Activated T-helper 2 cell treated with anti-CD3 and anti-CD28 coated beads, Interferon-gamma antibody, Interleukin-2, Interleukin-4, amounts not matched to agents 10 μg/mL and 5 μg/mL and 100 μg/mL, durations not matched to agents 14 hours and 24 hours and 36 hours (primary cell): ENCODE measurements at regions of chr15 and their contacts with region 1.

Region 1: GRCh38 chr15:52528991-52529926 is 579 bp upstream of the MYO5A start:
- DNase-seq: peak; percentile 78
- H3K4me3 Mint-ChIP-seq: peak overlapping the region; percentile 79
- H3K27ac Mint-ChIP-seq: peak overlapping the region; percentile 24
- H3K4me1 Mint-ChIP-seq: peaks cover 29% of the 10 kb centered on the region
- H3K27me3 Mint-ChIP-seq: peaks cover 18% of the 10 kb centered on the region

Region 2: DNA sequence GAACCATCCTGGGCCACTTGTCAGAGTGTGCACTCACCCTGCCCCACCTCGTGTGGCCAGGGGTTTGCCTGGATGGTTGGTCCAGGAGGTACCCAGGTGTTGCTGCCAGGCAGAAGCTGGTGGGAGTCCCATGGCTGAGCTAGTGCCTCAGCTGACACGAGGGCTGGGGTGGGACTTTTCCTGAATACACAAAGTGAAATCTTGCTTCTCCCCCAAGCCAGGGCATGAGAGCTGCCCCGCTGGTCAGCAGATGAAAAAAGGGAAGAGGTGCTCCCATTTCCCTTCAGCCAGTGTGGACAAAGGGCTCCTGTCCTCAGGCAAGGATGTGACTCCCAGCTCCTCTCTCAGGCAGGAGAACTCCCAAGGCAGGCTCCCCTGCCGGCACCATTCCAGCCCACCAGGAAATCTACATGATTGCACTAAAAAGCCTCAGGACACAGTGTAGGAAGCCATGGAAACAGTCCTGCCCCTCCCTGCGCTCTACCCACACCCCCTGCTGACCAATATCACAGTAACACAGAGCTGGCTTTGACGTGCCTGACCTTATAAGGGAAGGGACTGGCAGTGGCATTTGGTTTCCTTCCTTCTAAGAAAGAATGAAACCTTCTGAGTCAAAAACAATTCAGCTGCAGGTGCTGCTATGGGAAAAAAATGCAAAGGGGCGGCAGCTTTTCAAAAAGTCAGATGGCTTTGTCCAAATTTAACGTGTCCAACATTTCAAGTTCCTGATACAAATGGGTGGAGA is 267.6 kb before region 1 on chr15:
- intact Hi-C with region 1: loop called (anchors 1 kb)
- DNase-seq: peak; percentile 69
- H3K4me3 Mint-ChIP-seq: peak overlapping the region; percentile 51
- H3K27ac Mint-ChIP-seq: peak overlapping the region; percentile 84
- H3K4me1 Mint-ChIP-seq: peaks cover 42% of the 10 kb centered on the region
- H3K27me3 Mint-ChIP-seq: no peaks in the 10 kb centered on the region

Region 3: GRCh38 chr15:52466134-52466701 is 63.0 kb before region 1 on chr15:
- intact Hi-C with region 1: loop called (anchors 2 kb)
- DNase-seq: peak; percentile 48
- H3K4me3 Mint-ChIP-seq: no peak overlapping the region
- H3K27ac Mint-ChIP-seq: peak overlapping the region; percentile 55
- H3K4me1 Mint-ChIP-seq: peaks cover 43% of the 10 kb centered on the region
- H3K27me3 Mint-ChIP-seq: no peaks in the 10 kb centered on the region

Region 4: DNA sequence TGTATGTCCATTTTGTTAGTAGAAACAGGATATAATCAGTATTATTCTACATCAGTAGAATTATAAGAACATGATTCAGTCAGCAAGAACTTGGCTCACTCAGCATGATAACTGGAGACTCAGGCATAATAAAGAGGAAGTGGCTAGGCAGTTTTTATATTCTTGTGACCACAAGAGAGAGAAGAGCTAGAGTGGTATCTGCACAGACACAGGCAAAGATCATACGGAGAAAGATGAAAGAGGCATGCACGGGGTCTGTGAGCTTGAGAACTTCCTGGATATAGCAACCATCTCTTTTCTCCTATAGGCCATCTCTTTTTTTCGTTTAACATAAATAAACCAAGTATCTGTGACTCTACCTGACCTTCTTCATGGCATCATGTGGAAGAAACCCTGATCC is 47.3 kb before region 1 on chr15:
- intact Hi-C with region 1: loop called (anchors 2 kb)
- DNase-seq: peak; percentile 64
- H3K4me3 Mint-ChIP-seq: peak overlapping the region; percentile 66
- H3K27ac Mint-ChIP-seq: peak overlapping the region; percentile 80
- H3K4me1 Mint-ChIP-seq: peaks cover 64% of the 10 kb centered on the region
- H3K27me3 Mint-ChIP-seq: no peaks in the 10 kb centered on the region

Region 5: GRCh38 chr15:52568601-52569256 is 39.5 kb after region 1 on chr15 and contains the start of gene ARPP19:
- intact Hi-C with region 1: loop called (anchors 1 kb)
- DNase-seq: peak; percentile 80
- H3K4me3 Mint-ChIP-seq: peak within 1 kb of the TSS; percentile 96
- H3K27ac Mint-ChIP-seq: peak within 1 kb of the TSS; percentile 99
- H3K4me1 Mint-ChIP-seq: peaks cover 30% of the 10 kb centered on the region
- H3K27me3 Mint-ChIP-seq: no peaks in the 10 kb centered on the region
- total RNA-seq, gene ARPP19: 178 and 182 TPM in 2 replicates

Region 6: GRCh38 chr15:52626671-52627369 is 97.6 kb after region 1 on chr15:
- intact Hi-C with region 1: no loop called
- DNase-seq: no peak
- H3K4me3 Mint-ChIP-seq: no peak overlapping the region
- H3K27ac Mint-ChIP-seq: no peak overlapping the region
- H3K4me1 Mint-ChIP-seq: peaks cover 8% of the 10 kb centered on the region
- H3K27me3 Mint-ChIP-seq: no peaks in the 10 kb centered on the region

Region 7: DNA sequence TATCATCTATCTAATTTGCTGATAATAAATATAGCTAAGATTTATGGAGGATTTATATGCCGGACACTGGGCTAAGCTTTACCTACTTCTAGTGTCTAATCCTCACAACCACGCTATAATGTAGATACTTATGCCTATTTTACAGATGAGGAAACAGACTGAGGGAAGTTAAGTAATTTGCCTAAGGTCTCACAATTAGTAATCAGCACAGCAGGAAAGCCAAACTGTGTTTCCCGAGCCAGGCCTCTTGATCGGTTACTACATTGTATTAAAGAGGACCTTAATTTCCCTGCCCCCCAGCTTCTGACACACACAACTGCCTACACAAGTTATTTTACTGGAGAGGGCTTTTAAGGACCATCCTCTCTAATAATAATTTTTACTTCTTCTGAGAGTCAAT is 220.0 kb after region 1 on chr15:
- intact Hi-C with region 1: no loop called
- DNase-seq: no peak
- H3K4me3 Mint-ChIP-seq: no peak overlapping the region
- H3K27ac Mint-ChIP-seq: no peak overlapping the region
- H3K4me1 Mint-ChIP-seq: no peaks in the 10 kb centered on the region
- H3K27me3 Mint-ChIP-seq: peaks cover 36% of the 10 kb centered on the region